Activated B cell treated with CpG ODN at 0.5 μM for 24 hours (primary cell): ENCODE measurements at regions of chr12 and their contacts with region 1.

Region 1: DNA sequence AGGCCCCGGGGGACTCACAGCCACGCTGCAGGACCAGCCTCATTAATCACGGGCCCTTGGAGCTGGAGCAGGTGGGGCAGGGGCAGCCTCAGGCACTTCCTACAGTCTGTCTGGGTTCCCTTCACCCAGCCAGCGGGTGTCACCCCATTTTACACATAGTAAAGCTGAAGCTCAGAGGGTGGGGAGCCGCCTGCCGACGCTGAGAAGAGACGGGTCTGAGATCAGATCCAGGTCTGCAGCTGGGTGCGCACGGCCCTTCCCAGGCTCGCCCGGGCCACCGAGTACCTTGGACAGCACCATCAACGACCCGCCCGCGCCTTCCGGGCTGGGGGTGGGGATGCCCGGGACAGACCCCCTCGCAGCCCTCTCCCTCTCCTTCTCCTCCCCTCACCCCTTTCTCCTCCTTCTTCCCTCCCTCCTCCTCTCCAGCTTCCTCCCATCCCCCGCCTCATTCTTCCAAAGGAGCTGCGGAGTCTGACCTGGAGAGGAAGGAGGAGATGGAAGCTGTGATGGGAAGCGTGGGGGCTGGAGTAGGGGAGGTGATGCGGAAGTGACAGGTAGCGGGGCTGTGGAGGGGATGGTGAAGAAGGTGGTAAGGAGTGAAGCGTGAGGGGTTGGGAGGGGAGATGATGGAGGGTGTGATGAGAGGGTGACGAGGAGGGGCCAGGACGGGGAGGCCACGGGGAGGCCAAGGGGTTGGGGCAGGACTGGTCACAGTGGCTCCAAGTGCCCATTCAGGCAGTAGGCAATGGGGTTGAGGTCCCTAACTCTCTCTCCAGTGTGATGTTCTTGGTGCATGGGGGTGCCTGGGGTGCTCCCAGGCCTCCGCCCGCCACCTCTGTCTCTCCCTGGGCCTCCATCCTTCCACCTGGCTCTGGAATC is 8.8 kb downstream of the DTX1 start:
- DNase-seq: no peak
- ATAC-seq: peak; percentile 19
- H3K4me3 Mint-ChIP-seq: peak overlapping the region; percentile 57
- H3K27ac Mint-ChIP-seq: no peak overlapping the region
- H3K4me1 Mint-ChIP-seq: peaks cover 62% of the 10 kb centered on the region
- H3K27me3 Mint-ChIP-seq: no peaks in the 10 kb centered on the region
- CTCF ChIP-seq: no peak

Region 2: GRCh38 chr12:113092607-113093408 is 27.4 kb after region 1 on chr12:
- CTCF ChIA-PET with region 1: interaction called, 16 read pairs
- POLR2A ChIA-PET with region 1: interaction called, 57 read pairs
- intact Hi-C with region 1: loop called (anchors 1 kb)
- DNase-seq: no peak
- ATAC-seq: peak; percentile 65
- H3K4me3 Mint-ChIP-seq: peak overlapping the region; percentile 80
- H3K27ac Mint-ChIP-seq: peak overlapping the region; percentile 82
- H3K4me1 Mint-ChIP-seq: peaks cover 55% of the 10 kb centered on the region
- H3K27me3 Mint-ChIP-seq: no peaks in the 10 kb centered on the region
- CTCF ChIP-seq: no peak

Region 3: DNA sequence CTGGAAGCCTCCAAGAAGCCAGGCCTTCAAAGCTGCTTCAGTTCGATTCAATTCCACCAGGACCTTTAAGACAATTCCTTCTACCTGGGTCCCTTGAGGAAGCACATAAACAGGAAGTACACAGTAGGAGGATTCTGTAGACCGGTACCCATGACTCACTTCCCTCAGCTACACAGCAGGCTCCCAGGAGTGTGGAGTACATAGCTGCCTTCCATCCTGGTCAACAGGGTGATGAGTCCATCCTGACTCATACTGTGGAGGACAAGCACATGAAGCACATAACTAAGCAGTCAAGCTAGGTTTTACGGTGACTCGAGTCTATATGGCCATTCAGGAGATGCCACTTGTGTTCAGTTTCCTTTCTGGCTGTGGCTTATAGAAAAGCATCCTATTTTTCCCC is 1098.4 kb after region 1 on chr12:
- CTCF ChIA-PET with region 1: no interaction called
- POLR2A ChIA-PET with region 1: no interaction called
- intact Hi-C with region 1: no loop called
- DNase-seq: no peak
- ATAC-seq: no peak
- H3K4me3 Mint-ChIP-seq: no peak overlapping the region
- H3K27ac Mint-ChIP-seq: no peak overlapping the region
- H3K4me1 Mint-ChIP-seq: no peaks in the 10 kb centered on the region
- H3K27me3 Mint-ChIP-seq: no peaks in the 10 kb centered on the region
- CTCF ChIP-seq: no peak